HepG2 (cell line): ENCODE measurements at regions of chr2 and their contacts with region 1.

Region 1: DNA sequence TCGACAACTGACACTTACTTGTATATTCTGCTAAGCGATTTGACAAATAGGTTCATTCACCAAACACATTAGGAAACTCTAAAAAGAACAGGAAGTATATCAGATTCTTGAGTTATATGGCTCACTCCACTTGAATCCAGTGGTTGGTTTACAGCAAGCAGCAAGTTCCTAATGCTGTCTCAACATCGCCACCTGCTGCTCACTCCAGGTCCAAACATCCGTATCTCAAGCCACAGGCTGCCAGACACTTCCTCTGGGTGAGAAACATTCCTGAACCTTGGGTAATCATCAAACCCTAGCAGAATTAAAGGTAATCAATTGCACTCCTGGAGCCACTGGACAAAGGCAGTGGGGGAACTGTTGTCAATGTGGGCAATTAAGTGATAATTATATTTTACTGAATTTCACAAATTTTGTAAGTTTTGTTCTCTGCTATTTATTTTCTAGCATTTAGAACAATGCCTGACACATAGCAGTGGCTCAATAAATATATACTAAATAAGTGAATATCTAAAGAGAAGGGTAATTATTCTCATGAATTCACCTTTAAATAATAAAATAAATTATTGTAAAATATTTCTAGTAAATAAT is 107.1 kb upstream of the TTN start:
- DNase-seq: peak; percentile 76
- ATAC-seq: peak; percentile 99
- H3K4me3 ChIP-seq: no peak overlapping the region
- H3K27ac ChIP-seq: no peak overlapping the region
- H3K4me1 ChIP-seq: no peaks in the 10 kb centered on the region
- H3K27me3 ChIP-seq: peaks cover 0 to 4% of the 10 kb centered on the region in 2 experiments; a peak in 1 of 5 replicates
- CTCF ChIP-seq: peak; percentile 93
- EP300 ChIP-seq: no peak
- POLR2A ChIP-seq: no peak
- RAD21 ChIP-seq: peak; percentile 61

Region 2: GRCh38 chr2:178796079-178796677 is 118.2 kb before region 1 on chr2:
- CTCF ChIA-PET with region 1: interaction called, 6 read pairs
- POLR2A ChIA-PET with region 1: no interaction called
- in situ Hi-C with region 1: loop called (anchors 10 kb)
- intact Hi-C with region 1: loop called (anchors 1 kb)
- DNase-seq: peak; percentile 10
- ATAC-seq: no peak
- H3K4me3 ChIP-seq: no peak overlapping the region
- H3K27ac ChIP-seq: no peak overlapping the region
- H3K4me1 ChIP-seq: no peaks in the 10 kb centered on the region
- H3K27me3 ChIP-seq: peaks cover 0 to 23% of the 10 kb centered on the region in 2 experiments; a peak in 2 of 5 replicates
- CTCF ChIP-seq: peak; percentile 22; the same call in 1 of the 2 replicates
- EP300 ChIP-seq: no peak
- POLR2A ChIP-seq: no peak
- RAD21 ChIP-seq: no peak